Activated CD4-positive, alpha-beta memory T cell treated with anti-CD3 and anti-CD28 coated beads for 36 hours (primary cell): ENCODE measurements at regions of chr2 and their contacts with region 1.

Region 1: GRCh38 chr2:109213646-109214417 is 84.8 kb downstream of the SH3RF3 start:
- DNase-seq: peak; percentile 75
- H3K4me3 Mint-ChIP-seq: peak overlapping the region; percentile 41
- H3K27ac Mint-ChIP-seq: peak overlapping the region; percentile 54
- H3K4me1 Mint-ChIP-seq: peaks cover 68% of the 10 kb centered on the region
- H3K27me3 Mint-ChIP-seq: peaks cover 84% of the 10 kb centered on the region

Region 2: DNA sequence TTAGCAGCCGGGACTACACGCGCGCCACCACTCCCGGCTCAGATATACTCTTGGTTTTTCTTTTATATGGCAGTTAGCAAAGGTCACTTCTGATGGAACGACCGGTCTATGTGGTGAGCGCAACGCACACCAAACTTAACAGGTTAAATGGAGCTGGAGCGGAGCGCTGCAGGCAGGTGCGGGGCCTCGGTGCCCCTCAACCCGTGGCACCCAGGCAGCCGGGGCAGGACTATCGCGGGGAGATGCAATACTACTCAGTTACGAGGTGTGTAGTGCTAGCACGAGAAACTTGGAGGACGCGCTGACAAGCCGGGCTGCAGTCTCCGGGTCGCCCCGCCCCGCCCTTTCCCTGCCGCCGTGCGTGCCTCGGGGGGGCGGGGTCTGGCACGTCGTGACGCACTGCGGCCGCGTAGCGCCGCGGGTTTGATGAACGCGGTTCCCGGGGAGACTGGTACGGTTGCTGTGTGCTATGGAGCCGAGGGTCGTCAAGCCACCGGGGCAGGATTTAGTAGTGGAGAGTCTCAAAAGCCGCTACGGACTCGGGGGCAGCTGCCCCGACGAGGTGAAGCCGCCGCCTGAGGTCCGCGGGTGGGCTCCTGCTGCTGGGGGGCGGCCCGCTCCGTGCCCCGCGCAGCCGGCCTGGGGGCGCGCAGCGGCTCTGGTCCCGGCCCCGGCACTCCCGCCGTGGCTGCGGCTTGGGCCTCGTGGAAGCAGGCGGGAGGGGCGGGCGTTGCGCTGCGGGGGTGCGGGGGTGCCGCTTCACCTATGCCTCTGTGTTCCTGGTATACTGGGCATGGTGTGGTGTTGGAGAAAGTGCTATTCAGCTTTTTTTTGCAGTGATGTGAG is 427.3 kb before region 1 on chr2 and contains the start of gene CCDC138:
- CTCF ChIA-PET with region 1: no interaction called
- POLR2A ChIA-PET with region 1: no interaction called
- intact Hi-C with region 1: loop called (anchors 5 kb)
- DNase-seq: peak; percentile 94
- H3K4me3 Mint-ChIP-seq: peak within 1 kb of the TSS; percentile 91
- H3K27ac Mint-ChIP-seq: peak within 1 kb of the TSS; percentile 81
- H3K4me1 Mint-ChIP-seq: peaks cover 13% of the 10 kb centered on the region
- H3K27me3 Mint-ChIP-seq: no peaks in the 10 kb centered on the region
- total RNA-seq, gene CCDC138: 9.1 to 9.5 TPM

Region 3: GRCh38 chr2:109128048-109128465 is 85.8 kb before region 1 on chr2:
- CTCF ChIA-PET with region 1: no interaction called
- POLR2A ChIA-PET with region 1: no interaction called
- intact Hi-C with region 1: loop called (anchors 1 kb)
- DNase-seq: peak; percentile 74
- H3K4me3 Mint-ChIP-seq: peak overlapping the region; percentile 68
- H3K27ac Mint-ChIP-seq: no peak overlapping the region
- H3K4me1 Mint-ChIP-seq: peaks cover 11% of the 10 kb centered on the region
- H3K27me3 Mint-ChIP-seq: peaks cover 38% of the 10 kb centered on the region

Region 4: GRCh38 chr2:109143214-109144187 is 70.3 kb before region 1 on chr2:
- CTCF ChIA-PET with region 1: no interaction called
- POLR2A ChIA-PET with region 1: no interaction called
- intact Hi-C with region 1: loop called (anchors 1 kb)
- DNase-seq: peak; percentile 88
- H3K4me3 Mint-ChIP-seq: peak overlapping the region; percentile 52
- H3K27ac Mint-ChIP-seq: peak overlapping the region; percentile 71
- H3K4me1 Mint-ChIP-seq: peaks cover 33% of the 10 kb centered on the region
- H3K27me3 Mint-ChIP-seq: peaks cover 62% of the 10 kb centered on the region

Region 5: GRCh38 chr2:109312892-109313291 is 99.1 kb after region 1 on chr2:
- CTCF ChIA-PET with region 1: no interaction called
- POLR2A ChIA-PET with region 1: no interaction called
- intact Hi-C with region 1: no loop called
- DNase-seq: no peak
- H3K4me3 Mint-ChIP-seq: no peak overlapping the region
- H3K27ac Mint-ChIP-seq: no peak overlapping the region
- H3K4me1 Mint-ChIP-seq: no peaks in the 10 kb centered on the region
- H3K27me3 Mint-ChIP-seq: no peaks in the 10 kb centered on the region

Region 6: DNA sequence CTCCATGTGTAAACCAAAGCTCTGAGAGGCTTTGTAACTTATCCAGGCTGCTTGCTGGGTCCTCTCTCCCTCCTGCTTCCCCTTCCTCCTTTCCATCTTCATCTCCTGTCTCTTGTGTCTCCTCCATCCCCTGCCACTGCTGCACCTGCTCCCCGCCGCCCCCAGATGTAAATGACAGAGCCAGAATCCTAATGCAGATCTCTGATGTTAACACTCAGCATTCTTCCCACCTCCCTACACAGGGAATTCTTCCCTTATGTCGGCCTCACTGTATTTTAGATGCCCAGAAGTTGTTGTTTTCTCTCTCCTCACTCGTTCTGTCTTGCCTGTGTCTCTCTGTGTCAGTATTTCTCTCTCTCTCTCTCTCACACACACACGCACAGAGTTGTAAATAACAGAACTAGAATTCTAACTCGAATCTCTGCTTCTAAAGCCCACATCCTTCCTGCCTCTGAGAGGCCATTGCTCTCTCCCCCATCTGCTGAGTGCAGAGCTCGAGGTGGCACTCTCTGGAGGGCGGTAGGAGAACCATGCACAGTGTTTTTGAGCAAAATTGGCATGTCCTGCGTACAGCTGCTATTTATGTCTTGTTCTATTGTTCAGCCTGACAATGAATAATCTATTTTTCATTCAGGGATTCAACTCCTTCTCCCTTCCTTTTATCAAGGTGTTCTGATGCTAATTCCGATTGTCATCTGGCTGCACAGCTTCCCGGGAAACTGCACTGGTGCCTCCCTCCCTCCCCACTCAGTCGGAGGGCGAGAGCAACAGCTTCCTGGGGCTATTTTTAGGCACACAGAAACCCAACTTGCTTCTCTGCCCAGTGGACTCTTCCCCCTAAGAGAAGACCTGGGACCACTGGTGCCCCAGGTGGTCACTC is 135.1 kb after region 1 on chr2:
- CTCF ChIA-PET with region 1: no interaction called
- POLR2A ChIA-PET with region 1: no interaction called
- intact Hi-C with region 1: loop called (anchors 5 kb)
- DNase-seq: peak; percentile 57
- H3K4me3 Mint-ChIP-seq: peak overlapping the region; percentile 1
- H3K27ac Mint-ChIP-seq: peak overlapping the region; percentile 43
- H3K4me1 Mint-ChIP-seq: peaks cover 29% of the 10 kb centered on the region
- H3K27me3 Mint-ChIP-seq: no peaks in the 10 kb centered on the region

Region 7: GRCh38 chr2:109510136-109511028 is 296.6 kb after region 1 on chr2:
- CTCF ChIA-PET with region 1: interaction called, 5 read pairs
- POLR2A ChIA-PET with region 1: no interaction called
- intact Hi-C with region 1: loop called (anchors 5 kb)
- DNase-seq: peak; percentile 83
- H3K4me3 Mint-ChIP-seq: no peak overlapping the region
- H3K27ac Mint-ChIP-seq: no peak overlapping the region
- H3K4me1 Mint-ChIP-seq: peaks cover 15% of the 10 kb centered on the region
- H3K27me3 Mint-ChIP-seq: no peaks in the 10 kb centered on the region